ENCODE measurements at regions of chr6 and their contacts with region 1.

Region 1: GRCh38 chr6:145028144-145028818 is 707.0 kb downstream of the EPM2A start:
- DNase-seq: peak; percentile 45
- H3K4me3 ChIP-seq: no peak overlapping the region
- H3K27ac ChIP-seq: no peak overlapping the region
- H3K4me1 ChIP-seq: no peaks in the 10 kb centered on the region
- H3K27me3 ChIP-seq: no peaks in the 10 kb centered on the region
- CTCF ChIP-seq: peak; percentile 56 to 62

Region 2: DNA sequence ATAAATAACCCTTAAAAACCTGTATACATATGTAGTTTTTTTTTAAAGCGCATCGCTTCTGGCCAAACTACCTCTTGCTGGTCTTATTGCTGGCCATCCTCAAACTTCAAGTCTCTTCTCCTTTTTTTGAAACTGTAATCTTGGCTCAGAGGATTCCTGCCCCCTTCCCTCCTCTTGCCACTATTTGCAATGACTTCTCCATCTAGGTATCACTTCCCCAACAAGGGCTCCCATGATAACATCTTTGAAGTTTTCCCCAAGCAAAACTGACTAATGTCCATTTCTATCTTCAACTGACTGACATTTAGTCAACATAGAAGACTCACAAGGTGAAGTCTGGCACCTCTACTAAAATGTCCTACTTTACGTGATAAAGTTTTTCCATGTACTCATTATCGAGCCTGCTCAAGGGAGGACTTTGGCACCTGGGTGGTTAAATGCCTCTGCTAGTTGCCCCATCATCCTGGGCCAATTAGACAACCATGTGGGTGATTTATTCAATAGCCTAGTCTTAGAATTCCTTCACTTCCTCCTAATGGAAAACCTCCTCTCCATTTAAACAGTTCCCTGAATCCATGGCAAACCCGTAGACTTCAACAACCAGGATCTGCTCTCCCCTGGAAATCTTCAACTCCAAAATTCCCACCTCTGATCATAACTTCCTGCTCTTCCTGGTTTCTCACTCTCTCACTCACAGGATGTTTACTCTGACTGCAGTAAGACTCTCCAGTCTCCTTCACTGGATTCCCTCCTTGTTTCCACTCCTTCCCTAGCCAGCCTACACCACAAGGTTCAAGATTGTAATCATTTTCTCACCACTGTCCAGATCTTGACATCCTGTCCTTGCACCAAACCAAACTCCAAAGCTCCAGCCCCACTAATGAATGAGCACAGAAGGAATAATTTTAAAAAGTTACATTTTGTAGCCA is 1010.9 kb before region 1 on chr6:
- CTCF ChIA-PET with region 1: no interaction called
- dilution Hi-C with region 1: no loop called
- in situ Hi-C with region 1: no loop called
- intact Hi-C with region 1: no loop called
- DNase-seq: no peak
- H3K4me3 ChIP-seq: no peak overlapping the region
- H3K27ac ChIP-seq: no peak overlapping the region
- H3K4me1 ChIP-seq: no peaks in the 10 kb centered on the region
- H3K27me3 ChIP-seq: peaks cover 2% of the 10 kb centered on the region
- CTCF ChIP-seq: no peak

Region 3: DNA sequence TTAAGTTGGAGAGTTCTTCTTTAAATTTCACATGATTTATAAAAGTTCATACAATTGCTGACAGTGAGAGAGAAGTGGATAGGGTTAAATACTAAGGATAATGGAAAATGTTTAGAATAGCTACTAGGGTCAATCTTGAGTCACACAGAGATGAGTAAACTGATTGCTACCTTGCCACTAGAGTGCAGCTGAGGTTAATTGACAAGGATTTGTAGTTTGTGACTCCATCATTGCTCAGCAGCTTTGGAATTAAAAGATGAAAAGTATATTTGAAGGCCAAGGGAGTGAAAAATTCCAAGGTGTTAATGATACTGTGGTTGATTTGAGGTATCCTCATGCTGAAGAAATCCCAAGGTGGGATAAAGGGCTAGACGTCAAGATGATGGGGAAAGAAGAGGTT is 219.2 kb before region 1 on chr6:
- CTCF ChIA-PET with region 1: no interaction called
- dilution Hi-C with region 1: no loop called
- in situ Hi-C with region 1: no loop called
- intact Hi-C with region 1: loop called (anchors 5 kb)
- DNase-seq: peak; percentile 59
- H3K4me3 ChIP-seq: no peak overlapping the region
- H3K27ac ChIP-seq: no peak overlapping the region
- H3K4me1 ChIP-seq: peaks cover 8% of the 10 kb centered on the region
- H3K27me3 ChIP-seq: no peaks in the 10 kb centered on the region
- CTCF ChIP-seq: peak in 1 of 2 donors; percentile 40

Region 4: DNA sequence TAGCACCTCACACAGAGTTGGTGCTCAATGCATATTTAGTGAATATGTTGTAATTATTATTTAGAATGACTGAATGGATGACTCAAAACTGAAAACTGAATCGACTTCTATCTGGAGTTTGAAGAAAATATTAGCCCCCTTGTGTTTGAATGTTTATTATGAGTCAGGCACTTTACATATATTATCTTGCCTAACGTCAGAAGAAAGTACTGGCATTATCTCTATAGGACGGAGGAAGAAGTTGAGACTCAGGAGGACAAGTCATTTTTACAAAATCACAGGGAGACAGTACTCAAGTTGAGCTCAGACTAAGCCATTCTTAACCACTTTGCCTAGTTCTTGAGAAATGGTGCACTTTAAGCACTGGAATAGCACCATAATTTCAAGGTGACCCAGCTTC is 59.1 kb before region 1 on chr6:
- CTCF ChIA-PET with region 1: no interaction called
- dilution Hi-C with region 1: no loop called
- in situ Hi-C with region 1: no loop called
- intact Hi-C with region 1: no loop called
- DNase-seq: no peak
- H3K4me3 ChIP-seq: no peak overlapping the region
- H3K27ac ChIP-seq: no peak overlapping the region
- H3K4me1 ChIP-seq: no peaks in the 10 kb centered on the region
- H3K27me3 ChIP-seq: no peaks in the 10 kb centered on the region
- CTCF ChIP-seq: no peak

Region 5: GRCh38 chr6:145137426-145137825 is 109.1 kb after region 1 on chr6:
- CTCF ChIA-PET with region 1: no interaction called
- dilution Hi-C with region 1: no loop called
- in situ Hi-C with region 1: no loop called
- intact Hi-C with region 1: loop called (anchors 2 kb)
- DNase-seq: no peak
- H3K4me3 ChIP-seq: no peak overlapping the region
- H3K27ac ChIP-seq: no peak overlapping the region
- H3K4me1 ChIP-seq: no peaks in the 10 kb centered on the region
- H3K27me3 ChIP-seq: peaks cover 2% of the 10 kb centered on the region
- CTCF ChIP-seq: peak; percentile 21 to 44

Region 6: GRCh38 chr6:145214570-145214969 is 186.3 kb after region 1 on chr6:
- CTCF ChIA-PET with region 1: no interaction called
- dilution Hi-C with region 1: no loop called
- in situ Hi-C with region 1: no loop called
- intact Hi-C with region 1: loop called (anchors 5 kb)
- DNase-seq: peak; percentile 10
- H3K4me3 ChIP-seq: no peak overlapping the region
- H3K27ac ChIP-seq: no peak overlapping the region
- H3K4me1 ChIP-seq: no peaks in the 10 kb centered on the region
- H3K27me3 ChIP-seq: no peaks in the 10 kb centered on the region
- CTCF ChIP-seq: peak; percentile 36 to 49

Region 7: DNA sequence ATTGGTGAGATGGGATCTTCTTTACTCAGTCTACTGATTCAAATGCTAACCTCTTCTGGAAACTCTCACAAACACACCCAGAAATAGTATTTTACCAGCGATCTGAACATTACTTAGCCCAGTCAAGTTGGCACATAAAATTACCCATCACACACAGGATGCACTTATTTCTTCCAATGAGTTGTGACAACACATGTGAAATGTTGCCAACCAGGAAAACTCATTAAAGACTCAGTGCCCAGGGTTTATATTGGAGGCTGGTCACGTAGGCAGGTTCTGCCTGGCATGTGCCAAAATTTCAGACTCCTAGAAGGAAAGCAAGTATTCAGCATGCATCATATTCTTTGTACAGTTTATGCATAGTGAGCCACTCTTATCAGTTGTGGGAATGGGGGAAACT is 263.8 kb after region 1 on chr6:
- CTCF ChIA-PET with region 1: no interaction called
- dilution Hi-C with region 1: no loop called
- in situ Hi-C with region 1: no loop called
- intact Hi-C with region 1: no loop called
- DNase-seq: no peak
- H3K4me3 ChIP-seq: no peak overlapping the region
- H3K27ac ChIP-seq: no peak overlapping the region
- H3K4me1 ChIP-seq: no peaks in the 10 kb centered on the region
- H3K27me3 ChIP-seq: peaks cover 2% of the 10 kb centered on the region
- CTCF ChIP-seq: no peak